ENCODE measurements at regions of chr6 and their contacts with region 1.

Region 1: DNA sequence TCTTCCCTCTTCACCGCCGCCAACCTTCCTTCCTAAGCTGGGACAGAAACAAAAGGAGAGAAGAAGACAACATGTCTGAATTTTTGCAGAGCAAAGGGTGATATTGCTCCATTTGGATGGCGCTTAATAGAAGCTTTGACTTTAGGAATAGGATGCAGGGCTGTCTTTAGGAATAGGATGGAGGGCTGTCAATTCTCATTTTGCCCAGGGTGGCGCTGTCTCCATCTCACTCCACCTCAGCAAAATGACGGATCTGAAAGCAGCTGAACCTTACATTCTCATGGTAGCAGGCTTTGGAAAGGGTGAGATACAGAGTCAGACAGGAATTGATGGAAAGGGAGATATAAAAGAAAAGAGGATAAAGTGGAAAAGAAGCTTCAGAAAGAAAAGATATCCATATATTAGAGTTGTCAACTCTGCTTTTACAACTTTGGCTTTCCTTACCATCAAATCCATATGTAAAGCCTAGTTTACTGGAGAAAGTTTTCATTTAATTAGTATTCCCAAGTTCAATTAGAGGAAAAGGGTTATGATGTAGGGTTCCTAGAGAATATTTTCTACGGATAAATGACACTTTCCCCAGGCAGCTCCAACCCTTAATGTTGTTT is 2.4 kb downstream of the MTCL3 start:
- DNase-seq: peak; percentile 42
- H3K4me3 Mint-ChIP-seq: peak overlapping the region; percentile 81
- H3K27ac Mint-ChIP-seq: peak overlapping the region; percentile 78
- H3K4me1 Mint-ChIP-seq: peaks cover 44% of the 10 kb centered on the region
- H3K27me3 Mint-ChIP-seq: peaks cover 51% of the 10 kb centered on the region

Region 2: DNA sequence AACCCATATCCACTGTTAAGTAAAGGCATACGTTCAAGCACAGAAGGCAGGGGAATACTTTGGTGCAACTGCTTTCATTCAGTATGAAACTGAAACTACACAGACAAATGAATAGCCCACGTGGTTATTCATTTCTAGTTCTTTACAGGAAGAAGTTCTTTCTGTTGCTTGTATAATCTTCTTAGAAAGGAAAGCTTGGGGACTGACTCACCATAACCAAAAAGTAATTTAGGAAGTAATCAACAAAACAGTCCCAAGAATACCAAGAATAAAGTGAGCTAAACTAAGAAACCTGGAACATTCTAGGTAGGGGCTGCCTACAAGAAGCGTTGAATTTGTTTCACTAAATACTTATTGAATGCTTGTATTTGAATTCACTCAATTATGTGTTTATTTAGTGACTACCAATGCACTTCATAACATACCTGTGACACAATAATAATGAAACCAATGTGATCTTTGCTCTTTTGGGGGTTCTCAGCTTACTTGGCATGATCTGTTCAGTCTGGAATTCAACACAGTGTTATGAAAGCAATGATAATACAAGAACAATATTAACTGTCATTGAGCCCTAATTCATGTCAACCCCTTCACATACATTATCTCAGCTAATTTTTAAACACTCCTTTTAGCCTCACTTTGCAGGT is 32.4 kb before region 1 on chr6:
- CTCF ChIA-PET with region 1: interaction called, 43 read pairs
- POLR2A ChIA-PET with region 1: interaction called, 3 read pairs
- DNase-seq: peak; percentile 23
- H3K4me3 Mint-ChIP-seq: peak overlapping the region; percentile 46
- H3K27ac Mint-ChIP-seq: peak overlapping the region; percentile 88
- H3K4me1 Mint-ChIP-seq: peaks cover 30% of the 10 kb centered on the region
- H3K27me3 Mint-ChIP-seq: no peaks in the 10 kb centered on the region

Region 3: GRCh38 chr6:127496471-127496870 is 20.3 kb before region 1 on chr6:
- CTCF ChIA-PET with region 1: interaction called, 43 read pairs
- POLR2A ChIA-PET with region 1: no interaction called
- DNase-seq: no peak
- H3K4me3 Mint-ChIP-seq: no peak overlapping the region
- H3K27ac Mint-ChIP-seq: no peak overlapping the region
- H3K4me1 Mint-ChIP-seq: peaks cover 9% of the 10 kb centered on the region
- H3K27me3 Mint-ChIP-seq: peaks cover 9% of the 10 kb centered on the region

Region 4: GRCh38 chr6:127533011-127533410 is 16.2 kb after region 1 on chr6:
- CTCF ChIA-PET with region 1: interaction called, 19 read pairs
- POLR2A ChIA-PET with region 1: no interaction called
- DNase-seq: no peak
- H3K4me3 Mint-ChIP-seq: no peak overlapping the region
- H3K27ac Mint-ChIP-seq: no peak overlapping the region
- H3K4me1 Mint-ChIP-seq: no peaks in the 10 kb centered on the region
- H3K27me3 Mint-ChIP-seq: peaks cover 43% of the 10 kb centered on the region

Region 5: DNA sequence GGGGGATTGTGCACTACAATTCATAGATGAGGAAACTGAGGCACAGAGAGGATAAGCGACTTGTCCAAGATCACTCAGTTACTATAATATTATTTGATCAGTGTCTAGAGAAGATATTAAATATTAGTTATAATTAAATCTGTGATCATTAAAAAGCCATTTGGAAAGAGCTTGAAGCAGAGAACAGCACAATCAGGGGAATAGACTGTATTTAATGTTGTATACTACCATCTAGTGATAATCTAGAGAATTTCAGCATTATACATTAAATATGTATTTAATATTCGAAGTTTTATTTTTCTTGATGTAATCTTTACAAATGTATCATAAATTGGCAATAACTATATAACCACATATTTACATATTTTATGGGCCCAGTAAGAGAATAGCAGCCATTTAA is 22.5 kb after region 1 on chr6:
- CTCF ChIA-PET with region 1: interaction called, 17 read pairs
- POLR2A ChIA-PET with region 1: no interaction called
- DNase-seq: no peak
- H3K4me3 Mint-ChIP-seq: no peak overlapping the region
- H3K27ac Mint-ChIP-seq: no peak overlapping the region
- H3K4me1 Mint-ChIP-seq: peaks cover 2% of the 10 kb centered on the region
- H3K27me3 Mint-ChIP-seq: peaks cover 24% of the 10 kb centered on the region